ENCODE measurements at regions of chr17 and their contacts with region 1.

Region 1: GRCh38 chr17:48047741-48048383 is at the start of gene NFE2L1:
- DNase-seq: peak; percentile 100
- H3K4me3 ChIP-seq: peak within 1 kb of the TSS; percentile 92
- H3K27ac ChIP-seq: peak within 1 kb of the TSS; percentile 93
- H3K4me1 ChIP-seq: peaks cover 46% of the 10 kb centered on the region
- H3K27me3 ChIP-seq: no peaks in the 10 kb centered on the region
- CTCF ChIP-seq: no peak
- total RNA-seq, gene NFE2L1: 149 and 168 TPM in 2 replicates

Region 2: DNA sequence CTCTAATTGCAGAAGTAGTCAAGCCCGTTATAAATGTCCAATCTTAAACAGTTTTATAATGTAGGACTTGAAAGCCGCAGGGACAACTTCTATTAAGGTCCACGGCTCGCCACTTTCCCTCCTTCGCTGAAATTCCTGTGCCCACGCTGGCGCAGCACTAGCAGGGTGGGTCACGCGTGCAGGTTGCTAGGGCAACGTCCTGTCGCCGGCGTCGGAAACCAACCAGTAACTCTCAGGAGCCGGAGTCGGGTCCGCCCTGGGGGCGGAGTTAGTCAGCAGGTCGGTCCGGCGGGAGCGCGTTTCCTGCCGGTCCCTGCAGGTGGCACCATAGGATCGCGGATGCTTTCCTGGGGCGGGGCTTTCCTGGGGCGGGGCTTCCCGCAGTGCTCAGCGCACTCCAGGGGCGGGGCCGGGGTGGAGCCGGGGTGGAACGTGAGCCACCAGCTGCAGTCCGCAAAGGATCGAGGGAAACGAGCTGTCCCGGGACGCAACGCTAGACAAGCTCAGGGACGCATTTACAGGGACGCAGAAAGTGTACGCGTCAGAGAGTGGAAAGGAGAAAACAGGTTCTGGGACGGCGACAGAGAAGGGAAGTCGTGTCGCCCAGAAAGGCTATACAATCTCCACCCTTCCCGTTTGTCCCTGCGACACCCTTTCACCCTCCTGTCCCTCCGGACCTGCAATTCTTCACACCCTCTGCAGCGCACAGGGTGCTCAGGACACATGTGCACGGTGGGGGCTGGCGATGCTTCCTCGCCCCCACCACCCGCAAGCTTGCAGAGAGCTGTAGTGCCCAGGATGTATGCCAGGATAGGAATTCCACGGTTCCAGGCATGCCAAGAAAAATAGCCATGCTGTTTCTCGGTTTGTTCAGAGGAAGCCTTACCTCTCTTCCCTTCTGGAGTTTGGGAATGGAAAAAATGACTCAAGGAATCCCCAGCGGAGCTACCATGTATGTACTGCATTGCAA is 22.6 kb before region 1 on chr17:
- CTCF ChIA-PET with region 1: no interaction called
- POLR2A ChIA-PET with region 1: no interaction called
- intact Hi-C with region 1: loop called (anchors 1 kb)
- DNase-seq: peak; percentile 99
- H3K4me3 ChIP-seq: peak overlapping the region; percentile 46
- H3K27ac ChIP-seq: peak overlapping the region; percentile 57
- H3K4me1 ChIP-seq: peaks cover 44% of the 10 kb centered on the region
- H3K27me3 ChIP-seq: no peaks in the 10 kb centered on the region
- CTCF ChIP-seq: peak; percentile 95

Region 3: GRCh38 chr17:48074315-48075081 is 26.6 kb after region 1 on chr17:
- CTCF ChIA-PET with region 1: no interaction called
- POLR2A ChIA-PET with region 1: no interaction called
- intact Hi-C with region 1: no loop called
- DNase-seq: peak; percentile 85
- H3K4me3 ChIP-seq: no peak overlapping the region
- H3K27ac ChIP-seq: no peak overlapping the region
- H3K4me1 ChIP-seq: no peaks in the 10 kb centered on the region
- H3K27me3 ChIP-seq: no peaks in the 10 kb centered on the region
- CTCF ChIP-seq: peak; percentile 87

Region 4: GRCh38 chr17:48139944-48140343 is 92.1 kb after region 1 on chr17:
- CTCF ChIA-PET with region 1: interaction called, 26 read pairs
- POLR2A ChIA-PET with region 1: no interaction called
- intact Hi-C with region 1: no loop called
- DNase-seq: no peak
- H3K4me3 ChIP-seq: no peak overlapping the region
- H3K27ac ChIP-seq: no peak overlapping the region
- H3K4me1 ChIP-seq: peaks cover 11% of the 10 kb centered on the region
- H3K27me3 ChIP-seq: no peaks in the 10 kb centered on the region
- CTCF ChIP-seq: no peak

Region 5: GRCh38 chr17:48175692-48176470 is 128.0 kb after region 1 on chr17:
- CTCF ChIA-PET with region 1: no interaction called
- POLR2A ChIA-PET with region 1: interaction called, 26 read pairs
- intact Hi-C with region 1: no loop called
- DNase-seq: no peak
- H3K4me3 ChIP-seq: no peak overlapping the region
- H3K27ac ChIP-seq: no peak overlapping the region
- H3K4me1 ChIP-seq: peaks cover 21% of the 10 kb centered on the region
- H3K27me3 ChIP-seq: no peaks in the 10 kb centered on the region
- CTCF ChIP-seq: no peak

Measured in A673 (cell line).